Prostate gland (tissue), 2 donors: ENCODE measurements at regions of chr10 and their contacts with region 1.

Region 1: DNA sequence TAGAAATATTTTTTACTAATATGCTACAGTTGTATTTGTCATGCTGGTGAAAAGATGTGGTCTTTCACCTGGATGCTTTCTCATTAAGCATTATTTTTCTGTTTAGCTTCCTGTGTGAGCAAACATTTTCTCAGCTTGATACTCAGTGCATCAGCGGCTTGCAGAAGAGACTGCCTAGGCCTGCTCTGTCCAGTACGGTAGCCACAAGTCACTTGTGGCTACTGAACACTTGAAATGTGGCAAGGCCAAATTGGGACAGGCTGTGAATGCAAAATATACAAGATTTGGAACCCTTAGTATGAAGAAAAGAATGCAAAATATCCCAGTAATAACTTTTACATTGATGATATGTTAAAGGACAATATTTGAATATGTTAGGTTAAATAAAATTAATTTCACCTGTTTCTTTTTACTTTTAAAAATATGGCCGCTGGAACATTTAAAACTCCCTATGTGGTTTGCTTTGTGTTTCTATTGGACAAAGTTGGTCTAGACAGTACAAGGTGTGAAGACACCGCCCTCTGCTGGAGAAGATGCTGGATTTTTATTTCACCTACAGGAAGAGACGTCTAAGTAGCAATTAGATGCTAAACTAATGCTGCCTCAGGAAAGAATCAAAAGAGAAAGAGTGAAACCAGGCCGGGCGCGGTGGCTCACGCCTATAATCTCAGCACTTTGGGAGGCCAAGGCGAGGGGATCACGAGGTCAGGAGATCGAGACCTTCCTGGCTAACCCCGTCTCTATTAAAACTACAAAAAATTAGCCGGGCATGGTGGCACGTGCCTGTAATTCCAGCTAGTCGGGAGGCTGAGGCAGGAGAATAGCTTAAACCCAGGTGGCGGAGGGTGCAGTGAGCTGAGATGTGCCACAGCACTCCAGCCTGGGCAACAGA is 5.3 kb downstream of the SRGN start:
- DNase-seq: peak; percentile 75
- H3K4me3 ChIP-seq: no peak overlapping the region
- H3K27ac ChIP-seq: no peak overlapping the region
- H3K4me1 ChIP-seq: no peaks in the 10 kb centered on the region
- H3K27me3 ChIP-seq: no peaks in the 10 kb centered on the region
- CTCF ChIP-seq: peak; percentile 37 to 80 (median 76)
- POLR2A ChIP-seq: no peak

Region 2: GRCh38 chr10:69004821-69005220 is 88.4 kb before region 1 on chr10:
- intact Hi-C with region 1: loop called (anchors 5 kb)
- DNase-seq: no peak
- H3K4me3 ChIP-seq: no peak overlapping the region
- H3K27ac ChIP-seq: no peak overlapping the region
- H3K4me1 ChIP-seq: no peaks in the 10 kb centered on the region
- H3K27me3 ChIP-seq: no peaks in the 10 kb centered on the region
- CTCF ChIP-seq: peak in 3 of 4 experiments; percentile 23 to 55 (median 48)
- POLR2A ChIP-seq: no peak